ENCODE measurements at regions of chr17 and their contacts with region 1.

Region 1: DNA sequence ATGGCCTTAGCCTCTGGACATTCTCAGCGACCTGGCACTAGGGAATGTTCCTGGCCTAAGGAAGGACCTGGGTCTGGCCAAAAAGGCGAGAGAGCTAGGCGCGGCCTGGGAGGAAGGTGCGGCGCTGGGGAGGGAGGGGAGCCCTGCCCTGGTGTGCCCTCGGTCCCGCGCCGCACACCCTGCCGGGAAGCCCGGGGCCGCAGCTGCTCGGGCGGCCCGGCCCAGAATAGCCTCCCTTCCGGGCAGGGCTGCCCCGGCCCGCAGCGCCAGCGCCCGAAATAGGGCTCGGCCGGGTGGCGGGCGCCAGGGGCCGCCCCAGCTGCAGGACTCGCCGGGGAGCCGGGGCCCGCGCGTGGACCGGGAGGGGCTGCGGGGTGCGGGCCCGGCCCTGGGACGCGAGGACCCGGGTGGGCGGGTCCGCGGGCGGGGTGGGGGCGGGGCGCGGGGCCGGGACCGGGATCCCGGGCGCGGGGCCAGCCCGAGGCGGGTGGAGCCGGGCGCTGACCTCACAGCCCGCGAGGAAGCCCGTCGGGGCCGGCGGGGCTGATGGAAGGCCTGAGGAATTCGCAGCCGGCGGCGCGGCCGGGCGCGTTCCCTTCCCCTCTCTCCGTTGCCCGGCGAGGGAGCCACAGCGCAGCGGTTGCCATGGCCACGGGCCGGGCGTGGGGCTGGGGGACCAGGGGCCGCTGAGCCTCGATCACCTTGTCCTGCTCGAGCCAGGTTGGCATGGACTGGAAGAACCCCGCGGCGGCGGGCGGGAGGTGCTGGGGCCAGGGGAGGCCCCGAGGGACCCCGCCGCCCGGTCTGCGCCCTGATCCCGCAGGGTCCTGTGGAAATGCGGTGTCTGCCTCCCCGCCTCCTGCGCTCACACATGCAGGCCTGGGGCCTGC is 18.1 kb downstream of the SOCS3 start:
- DNase-seq: peak; percentile 97
- H3K4me3 ChIP-seq: peak overlapping the region; percentile 31 to 36; a peak in 3 of 4 replicates
- H3K27ac ChIP-seq: peak overlapping the region; percentile 72 to 95
- H3K4me1 ChIP-seq: peaks cover 28 to 39% of the 10 kb centered on the region in 2 experiments; a peak in 3 of 4 replicates
- H3K27me3 ChIP-seq: no peaks in the 10 kb centered on the region
- CTCF ChIP-seq: no peak
- EP300 ChIP-seq: peak in 1 of 2 experiments; percentile 58; a peak in 1 of 4 replicates
- RAD21 ChIP-seq: no peak; the same call in 1 of the 2 replicates

Region 2: DNA sequence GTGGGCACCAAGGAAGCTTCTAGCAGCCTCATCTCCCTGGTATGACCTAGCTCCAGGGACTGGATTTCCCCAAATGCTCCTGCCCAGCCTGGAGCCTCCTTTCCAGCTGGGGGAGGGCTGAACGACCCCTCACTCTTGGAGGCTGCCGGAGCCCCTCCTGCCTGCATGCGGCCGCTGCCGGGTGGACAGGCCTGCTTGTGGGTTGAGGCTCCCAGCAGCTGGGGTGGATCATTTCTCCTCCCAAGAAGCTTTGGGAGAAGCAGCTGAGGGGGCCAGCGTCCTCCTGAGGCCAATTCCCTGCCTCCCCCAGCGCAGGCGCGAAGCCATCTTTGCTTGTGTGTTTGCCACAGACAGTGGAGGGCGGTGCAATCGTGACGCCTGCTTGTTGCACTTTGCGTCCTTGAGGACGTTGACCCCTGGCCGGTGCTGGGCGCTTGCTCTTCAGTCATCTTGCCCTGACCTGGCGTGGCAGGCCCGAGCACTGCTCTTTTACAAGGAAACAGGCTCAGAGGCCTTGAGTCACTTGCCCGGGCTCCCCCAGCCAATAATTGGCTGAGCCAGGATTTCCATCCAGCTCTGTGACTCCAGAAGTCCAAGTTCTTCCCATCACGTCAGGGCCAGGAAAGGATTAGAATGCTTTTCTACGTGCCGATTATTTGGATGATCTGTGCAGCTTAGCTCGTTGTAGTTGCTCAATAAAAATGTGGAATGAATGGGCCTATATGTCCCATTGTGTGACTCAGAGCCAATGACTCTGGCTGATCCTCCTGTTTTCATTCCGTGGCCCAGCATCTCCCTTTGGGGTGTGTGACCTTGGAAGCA is 987.2 kb before region 1 on chr17:
- CTCF ChIA-PET with region 1: no interaction called
- POLR2A ChIA-PET with region 1: no interaction called
- DNase-seq: no peak
- H3K4me3 ChIP-seq: no peak overlapping the region
- H3K27ac ChIP-seq: peak overlapping the region; percentile 3 to 28; a peak in 3 of 4 replicates
- H3K4me1 ChIP-seq: peaks cover 9 to 55% of the 10 kb centered on the region in 2 experiments; a peak in 2 of 4 replicates
- H3K27me3 ChIP-seq: no peaks in the 10 kb centered on the region
- CTCF ChIP-seq: no peak
- EP300 ChIP-seq: no peak
- RAD21 ChIP-seq: no peak

Region 3: GRCh38 chr17:78272181-78272913 is 69.5 kb before region 1 on chr17:
- CTCF ChIA-PET with region 1: no interaction called
- POLR2A ChIA-PET with region 1: no interaction called
- DNase-seq: peak; percentile 15
- H3K4me3 ChIP-seq: no peak overlapping the region
- H3K27ac ChIP-seq: no peak overlapping the region; a peak in 1 of 4 replicates
- H3K4me1 ChIP-seq: peaks cover 0 to 54% of the 10 kb centered on the region in 2 experiments; a peak in 2 of 4 replicates
- H3K27me3 ChIP-seq: peaks cover 16% of the 10 kb centered on the region
- CTCF ChIP-seq: no peak
- EP300 ChIP-seq: no peak
- RAD21 ChIP-seq: no peak

Region 4: GRCh38 chr17:78324391-78325075 is 17.3 kb before region 1 on chr17:
- CTCF ChIA-PET with region 1: interaction called, 15 read pairs
- POLR2A ChIA-PET with region 1: no interaction called
- DNase-seq: peak; percentile 89
- H3K4me3 ChIP-seq: no peak overlapping the region
- H3K27ac ChIP-seq: peak overlapping the region; percentile 62 to 92
- H3K4me1 ChIP-seq: peaks cover 32 to 33% of the 10 kb centered on the region in 2 experiments; a peak in 3 of 4 replicates
- H3K27me3 ChIP-seq: no peaks in the 10 kb centered on the region
- CTCF ChIP-seq: no peak
- EP300 ChIP-seq: no peak
- RAD21 ChIP-seq: no peak

Measured in SK-N-SH (cell line).